ENCODE measurements at regions of chr11 and their contacts with region 1.

Region 1: DNA sequence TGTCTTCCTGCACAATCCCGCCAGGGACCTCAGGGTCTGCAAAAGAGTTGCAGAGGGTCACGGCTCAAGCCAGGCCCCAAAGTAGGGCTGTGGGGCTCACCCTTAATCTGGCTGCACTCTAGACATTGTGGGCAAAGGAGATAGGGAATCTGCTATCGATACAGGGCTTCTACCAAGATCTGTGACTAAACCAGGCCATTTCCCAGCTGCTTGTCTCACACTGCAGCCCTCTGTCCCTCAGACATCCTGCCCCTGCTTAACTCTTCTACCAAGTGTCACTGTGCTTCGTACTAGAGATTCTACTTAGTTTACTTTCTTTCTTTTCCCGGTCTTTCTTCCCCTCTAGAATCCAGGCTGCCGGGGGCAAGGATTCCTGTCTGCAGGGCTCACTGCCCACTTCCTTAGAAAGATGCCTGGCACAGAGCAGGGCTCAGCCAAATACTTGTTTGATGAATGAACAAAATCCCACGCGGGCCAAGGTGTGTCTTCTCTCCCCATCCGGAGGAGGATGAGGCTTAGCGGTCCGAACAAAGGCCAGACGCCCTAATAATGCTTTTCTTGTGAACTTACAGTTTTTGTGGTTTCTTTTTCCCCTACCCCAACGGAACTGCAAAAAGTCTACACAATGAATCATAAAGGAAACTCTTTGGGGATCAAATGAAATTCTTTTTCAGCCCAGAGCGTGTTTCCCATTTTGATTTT is 61.3 kb upstream of the ANO1 start:
- DNase-seq: peak; percentile 75
- H3K4me3 ChIP-seq: no peak overlapping the region
- CTCF ChIP-seq: no peak

Region 2: DNA sequence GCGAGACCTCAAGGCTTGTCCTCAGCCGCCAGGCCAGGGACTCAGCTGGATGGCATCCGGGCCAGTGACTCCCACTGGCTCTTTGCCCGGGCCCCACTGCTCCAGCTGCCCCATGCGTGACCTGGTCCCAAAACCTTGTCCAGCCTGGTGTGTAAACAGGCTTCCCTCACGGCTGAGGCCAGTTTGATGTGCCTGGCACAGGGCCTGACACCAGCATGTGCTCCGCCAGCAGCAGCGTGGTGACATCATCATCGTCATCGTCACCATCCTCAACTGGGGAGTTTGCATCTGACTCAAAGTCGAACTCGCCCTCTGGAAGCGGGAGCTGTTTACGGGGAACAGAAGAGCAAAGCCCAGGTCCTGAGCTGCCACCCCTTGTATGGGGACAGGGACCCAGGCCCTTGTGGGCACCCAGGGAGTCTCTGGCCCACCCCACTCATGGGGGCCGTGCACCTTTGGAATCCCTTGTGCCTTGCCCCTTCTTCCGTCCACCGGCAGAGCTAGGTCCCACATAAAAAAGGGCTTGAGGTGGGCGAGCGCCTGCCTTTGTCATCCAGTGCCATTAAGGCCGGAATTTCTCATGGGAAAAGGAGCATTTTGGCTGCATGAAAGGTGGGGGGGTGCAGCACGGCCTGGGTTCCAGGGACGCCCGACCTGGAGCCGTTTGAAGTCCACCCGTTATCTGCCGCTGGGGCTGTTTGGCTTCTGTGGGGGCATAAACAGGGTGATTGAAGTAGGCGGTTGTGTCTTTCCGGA is 148.9 kb before region 1 on chr11:
- in situ Hi-C with region 1: no loop called
- DNase-seq: peak; percentile 16
- H3K4me3 ChIP-seq: no peak overlapping the region
- CTCF ChIP-seq: no peak

Region 3: GRCh38 chr11:70191495-70192140 is 174.8 kb after region 1 on chr11:
- in situ Hi-C with region 1: loop called (anchors 25 kb)
- DNase-seq: peak; percentile 56
- H3K4me3 ChIP-seq: no peak overlapping the region
- CTCF ChIP-seq: peak; percentile 95